ENCODE measurements at regions of chr10 and their contacts with region 1.

Region 1: GRCh38 chr10:95693668-95694534 is at the start of gene TCTN3:
- DNase-seq: peak; percentile 97 to 98
- ATAC-seq: peak; percentile 100
- H3K4me3 ChIP-seq: peak within 1 kb of the TSS; percentile 77 to 93 (median 92)
- H3K27ac ChIP-seq: peak within 1 kb of the TSS; percentile 81 to 90 (median 87)
- H3K4me1 ChIP-seq: peaks cover 4 to 13% of the 10 kb centered on the region in 2 donors
- H3K27me3 ChIP-seq: no peaks in the 10 kb centered on the region
- CTCF ChIP-seq: peak; percentile 98 to 100 (median 99)
- POLR2A ChIP-seq: peak; percentile 41 to 51
- total RNA-seq, gene TCTN3: 6.3 to 8.6 (median 6.8) TPM

Region 2: DNA sequence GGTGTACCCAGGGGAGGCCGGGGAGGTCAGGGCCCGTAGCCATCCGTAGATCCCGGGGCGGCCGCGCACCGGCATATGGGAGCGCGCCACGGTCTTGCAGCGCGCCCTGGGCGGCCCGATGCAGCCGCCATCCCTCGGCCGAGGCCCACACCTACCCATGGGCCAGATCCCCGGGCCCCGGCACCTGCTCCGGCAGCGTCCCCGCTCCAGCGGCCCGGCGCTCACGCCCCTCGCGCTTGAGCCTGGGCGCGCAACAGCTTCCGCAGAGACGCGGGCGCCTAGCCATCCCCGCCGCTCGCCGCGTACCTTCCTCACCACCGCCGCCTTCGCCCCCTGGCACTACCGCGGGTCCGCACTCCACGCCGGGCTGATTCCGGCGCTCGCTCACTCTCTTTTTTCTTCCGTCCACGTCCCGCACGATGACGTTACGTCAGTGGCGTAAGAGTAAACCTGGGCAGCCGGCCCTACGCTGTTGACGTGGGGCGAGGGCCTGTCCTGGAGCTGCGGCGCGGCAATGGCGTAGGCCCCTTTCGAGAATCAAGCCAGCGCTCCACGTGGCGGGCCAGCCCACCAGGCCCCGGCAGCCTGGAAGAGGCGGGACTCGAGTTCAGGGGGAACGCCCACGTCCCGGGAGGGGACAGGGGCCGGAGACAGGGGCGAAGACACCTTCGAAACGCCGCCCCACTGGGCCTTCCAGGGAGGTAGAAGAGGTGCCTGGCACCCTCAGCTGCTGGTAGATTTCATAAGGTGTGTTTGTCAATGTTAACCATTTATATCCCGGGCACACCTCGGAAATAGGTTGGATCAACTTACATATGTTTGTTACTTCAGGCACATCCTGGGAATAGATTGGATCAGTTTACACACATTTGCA is 37.4 kb before region 1 on chr10 and contains the start of gene ALDH18A1:
- in situ Hi-C with region 1: no loop called
- intact Hi-C with region 1: loop called (anchors 5 kb)
- DNase-seq: peak; percentile 55 to 80
- ATAC-seq: peak; percentile 91 to 92
- H3K4me3 ChIP-seq: peak within 1 kb of the TSS; percentile 68 to 100 (median 75)
- H3K27ac ChIP-seq: peak within 1 kb of the TSS; percentile 24 to 74 (median 40)
- H3K4me1 ChIP-seq: peaks cover 5 to 7% of the 10 kb centered on the region in 2 donors
- H3K27me3 ChIP-seq: no peaks in the 10 kb centered on the region
- CTCF ChIP-seq: no peak
- POLR2A ChIP-seq: no peak
- total RNA-seq, gene ALDH18A1: 2.6 to 6.7 (median 5.7) TPM

Region 3: GRCh38 chr10:95739056-95739455 is 45.2 kb after region 1 on chr10:
- in situ Hi-C with region 1: no loop called
- intact Hi-C with region 1: no loop called
- DNase-seq: no peak
- ATAC-seq: no peak
- H3K4me3 ChIP-seq: no peak overlapping the region
- H3K27ac ChIP-seq: no peak overlapping the region
- H3K4me1 ChIP-seq: peaks cover 4% of the 10 kb centered on the region in 2 donors
- H3K27me3 ChIP-seq: no peaks in the 10 kb centered on the region
- CTCF ChIP-seq: no peak
- POLR2A ChIP-seq: no peak

Region 4: DNA sequence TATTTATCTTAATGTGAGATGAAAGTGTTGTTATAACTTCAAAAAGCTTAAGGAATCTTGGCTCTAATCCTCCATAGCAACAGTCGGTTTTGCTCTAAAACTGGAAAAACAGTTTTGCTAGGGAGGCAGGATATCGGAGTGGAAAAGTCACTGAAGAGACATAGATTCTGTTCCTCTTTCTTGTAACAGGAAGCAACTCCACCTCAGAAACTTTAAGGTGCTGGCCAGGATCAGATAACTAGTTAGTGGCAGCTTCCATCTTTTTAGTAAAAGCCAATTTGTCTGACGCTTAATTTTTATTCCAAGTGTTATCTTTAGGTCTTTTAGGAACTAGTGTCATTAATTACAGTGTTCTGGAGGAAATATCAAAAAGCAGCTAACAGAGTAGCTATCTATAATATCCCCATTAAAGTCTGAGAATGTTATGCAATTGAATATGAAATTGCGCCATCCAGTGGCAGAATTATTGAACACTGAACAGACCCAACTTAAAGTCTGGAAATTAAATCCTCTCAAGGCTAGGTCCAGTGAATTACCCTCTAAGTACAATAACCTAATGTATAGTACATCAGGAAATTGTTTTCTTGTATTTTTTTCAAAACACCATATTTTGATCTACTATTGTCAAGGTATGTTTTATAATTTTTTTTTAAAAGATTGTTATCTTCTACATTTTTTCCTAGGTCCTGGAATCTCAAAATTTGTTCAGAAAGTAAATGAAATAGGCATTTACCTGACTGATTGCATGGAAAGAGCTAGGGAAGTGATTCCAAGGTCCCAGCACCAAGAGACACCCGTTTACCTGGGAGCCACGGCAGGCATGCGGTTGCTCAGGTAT is 148.0 kb after region 1 on chr10:
- in situ Hi-C with region 1: loop called in 2 of 4 experiments (anchors 5 to 10 kb)
- intact Hi-C with region 1: loop called (anchors 1 kb)
- DNase-seq: no peak
- ATAC-seq: peak; percentile 33 to 55
- H3K4me3 ChIP-seq: no peak overlapping the region
- H3K27ac ChIP-seq: peak overlapping the region in 3 of 4 donors; percentile 18 to 49 (median 21)
- H3K4me1 ChIP-seq: peaks cover 0 to 4% of the 10 kb centered on the region in 2 donors
- H3K27me3 ChIP-seq: no peaks in the 10 kb centered on the region
- CTCF ChIP-seq: peak; percentile 22 to 57 (median 41)
- POLR2A ChIP-seq: no peak

Region 5: DNA sequence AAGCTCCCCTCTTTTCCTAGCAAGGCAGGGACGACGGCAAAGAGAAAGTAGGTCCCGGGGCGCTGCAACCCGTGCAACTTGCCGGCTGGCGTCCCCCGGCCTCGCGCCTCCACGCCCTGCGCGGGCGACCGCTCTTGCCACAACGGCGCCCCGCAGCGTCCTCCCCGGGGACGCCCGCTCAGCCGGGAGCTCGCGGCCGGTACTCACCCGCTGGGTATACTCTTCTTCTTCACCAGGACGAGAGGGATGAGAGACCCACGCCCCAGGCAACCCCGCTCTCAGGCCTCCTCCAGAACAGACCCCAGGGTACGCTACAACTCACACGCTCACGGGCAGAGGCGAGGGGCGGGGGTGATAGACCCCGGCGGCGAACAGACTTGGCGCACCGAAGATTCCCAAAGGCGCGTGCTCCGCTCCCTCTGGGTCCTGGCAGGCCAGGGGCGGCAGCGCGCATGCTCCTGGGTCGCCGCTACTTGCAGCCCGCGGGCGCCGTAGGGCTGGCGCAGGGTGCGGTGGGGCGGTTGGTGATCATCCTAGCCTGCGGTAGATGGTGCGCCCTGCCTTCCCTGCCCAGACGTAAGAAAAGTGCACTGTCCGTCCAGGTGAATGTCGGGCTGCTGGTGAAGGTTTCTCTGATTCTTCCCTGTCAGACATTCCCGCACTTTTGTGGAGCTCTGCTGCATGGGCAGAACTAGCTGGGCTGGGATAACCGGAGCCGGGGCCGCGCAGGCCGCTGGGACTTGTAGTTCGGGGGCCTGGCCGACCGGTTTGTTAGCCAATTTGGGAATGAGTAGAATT is 213.8 kb after region 1 on chr10 and contains the start of gene CC2D2B:
- in situ Hi-C with region 1: no loop called
- intact Hi-C with region 1: loop called (anchors 5 kb)
- DNase-seq: peak; percentile 56 to 72
- ATAC-seq: peak; percentile 94 to 97
- H3K4me3 ChIP-seq: peak within 1 kb of the TSS; percentile 75 to 90 (median 84)
- H3K27ac ChIP-seq: peak within 1 kb of the TSS; percentile 86 to 94 (median 88)
- H3K4me1 ChIP-seq: peaks cover 0 to 5% of the 10 kb centered on the region in 2 donors
- H3K27me3 ChIP-seq: no peaks in the 10 kb centered on the region
- CTCF ChIP-seq: no peak
- POLR2A ChIP-seq: no peak
- total RNA-seq, gene CC2D2B: 0.13 to 0.36 (median 0.31) TPM in 3 of 4 donors, not detected in the other

Region 6: GRCh38 chr10:96292971-96293920 is 599.3 kb after region 1 on chr10:
- in situ Hi-C with region 1: no loop called
- intact Hi-C with region 1: loop called (anchors 2 kb)
- DNase-seq: no peak
- ATAC-seq: peak; percentile 74 to 78
- H3K4me3 ChIP-seq: no peak overlapping the region
- H3K27ac ChIP-seq: no peak overlapping the region
- H3K4me1 ChIP-seq: peaks cover 3 to 4% of the 10 kb centered on the region in 2 donors
- H3K27me3 ChIP-seq: peaks cover 0 to 7% (median 3%) of the 10 kb centered on the region in 3 donors
- CTCF ChIP-seq: peak in 4 of 5 experiments; percentile 28 to 60 (median 42)
- POLR2A ChIP-seq: no peak